Psoas muscle (tissue), 8 donors: ENCODE measurements at regions of chr6 and their contacts with region 1.

Region 1: DNA sequence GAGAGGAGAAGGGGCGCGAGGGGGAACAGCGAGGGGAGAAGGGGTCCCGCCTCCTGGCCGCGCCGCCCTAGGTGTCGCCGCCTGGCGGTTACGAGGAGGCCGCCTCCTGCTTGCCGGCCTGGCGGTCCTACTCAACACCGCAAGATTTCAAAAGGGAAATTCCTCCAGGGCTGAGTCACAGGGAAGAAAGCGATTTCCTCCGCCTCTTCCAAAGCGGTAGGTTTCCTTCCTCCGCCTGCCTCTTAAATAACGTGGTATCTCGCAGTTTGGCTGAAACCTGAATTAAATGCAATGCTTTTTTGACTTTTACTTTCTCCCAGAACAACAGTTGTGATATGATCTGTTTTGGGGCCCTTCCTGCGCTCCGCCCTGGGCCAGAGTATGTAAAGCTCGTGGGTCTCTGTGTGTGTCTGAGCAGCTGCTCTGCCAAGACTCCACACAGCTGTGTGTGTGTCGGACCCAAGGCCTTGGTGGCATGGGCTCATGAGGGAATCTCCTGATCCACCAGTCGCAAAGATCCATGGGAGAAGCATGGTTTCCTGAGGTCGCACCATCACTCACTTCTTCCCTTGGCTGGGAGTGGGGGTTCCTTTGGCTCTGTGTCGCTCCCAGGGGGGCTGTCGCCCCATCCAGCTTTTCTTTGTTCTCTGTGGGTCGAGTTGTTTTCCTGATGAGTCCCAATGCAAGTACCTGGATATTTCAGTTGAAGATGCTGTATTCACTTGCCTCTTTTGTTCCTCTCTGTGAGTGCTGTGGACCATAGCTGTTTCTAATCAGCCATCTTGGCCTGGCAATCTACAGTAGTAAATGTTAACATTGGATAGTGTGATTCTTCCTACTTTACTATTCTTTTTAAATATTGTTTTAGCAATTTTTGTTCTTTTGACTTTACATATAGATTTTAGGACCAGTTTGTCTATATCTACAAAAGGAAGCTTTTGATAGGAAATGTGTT is 31.6 kb upstream of the NOTCH4 start:
- DNase-seq: peak; percentile 72 to 80
- ATAC-seq: peak; percentile 88 to 97 (median 92)
- H3K4me3 ChIP-seq: peak overlapping the region; percentile 45
- H3K27ac ChIP-seq: peak overlapping the region; percentile 71
- H3K4me1 ChIP-seq: peaks cover 3% of the 10 kb centered on the region
- H3K27me3 ChIP-seq: peaks cover 0 to 15% (median 0%) of the 10 kb centered on the region in 3 donors
- CTCF ChIP-seq: peak; percentile 65

Region 2: DNA sequence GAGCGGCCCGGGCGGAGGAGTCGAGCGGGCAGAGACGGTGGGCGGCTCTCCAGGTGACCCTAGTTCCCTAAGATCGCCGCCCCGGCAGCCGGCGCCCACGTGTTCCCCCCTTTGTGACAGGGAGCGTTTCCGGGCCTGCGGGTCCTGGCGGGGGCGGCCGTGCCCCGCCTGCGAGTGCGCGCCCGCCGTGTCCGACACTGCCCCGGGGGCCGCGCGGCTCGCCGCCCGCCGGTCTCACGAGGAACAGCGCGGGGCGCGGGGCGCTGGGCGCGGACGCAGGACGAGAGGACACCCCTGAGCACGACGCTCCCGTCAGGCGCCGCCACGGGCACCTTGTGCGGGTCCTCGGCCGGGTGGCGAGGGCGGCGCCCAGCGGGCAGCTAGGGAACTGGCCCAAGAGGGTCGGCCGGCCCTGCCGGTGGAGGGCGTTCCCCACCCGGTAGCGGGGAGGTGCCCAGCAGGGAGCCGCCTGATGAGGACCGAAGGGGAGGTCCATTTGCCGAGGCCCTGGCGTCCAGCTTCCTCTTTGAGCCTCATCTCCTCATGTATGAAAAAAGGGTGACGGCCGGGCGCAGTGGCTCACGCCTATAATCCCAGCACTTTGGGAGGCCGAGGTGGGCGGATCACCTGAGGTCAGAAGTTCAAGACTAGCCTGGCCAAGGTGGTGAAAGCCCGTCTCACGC is 459.7 kb before region 1 on chr6 and contains the start of gene VARS1:
- intact Hi-C with region 1: no loop called
- DNase-seq: peak; percentile 93 to 96
- ATAC-seq: peak; percentile 90 to 93 (median 92)
- H3K4me3 ChIP-seq: peak within 1 kb of the TSS; percentile 81
- H3K27ac ChIP-seq: peak within 1 kb of the TSS; percentile 94
- H3K4me1 ChIP-seq: peaks cover 24% of the 10 kb centered on the region
- H3K27me3 ChIP-seq: no peaks in the 10 kb centered on the region
- CTCF ChIP-seq: peak; percentile 80
- total RNA-seq, gene VARS1: 53.2 to 108 (median 76.1) TPM

Region 3: DNA sequence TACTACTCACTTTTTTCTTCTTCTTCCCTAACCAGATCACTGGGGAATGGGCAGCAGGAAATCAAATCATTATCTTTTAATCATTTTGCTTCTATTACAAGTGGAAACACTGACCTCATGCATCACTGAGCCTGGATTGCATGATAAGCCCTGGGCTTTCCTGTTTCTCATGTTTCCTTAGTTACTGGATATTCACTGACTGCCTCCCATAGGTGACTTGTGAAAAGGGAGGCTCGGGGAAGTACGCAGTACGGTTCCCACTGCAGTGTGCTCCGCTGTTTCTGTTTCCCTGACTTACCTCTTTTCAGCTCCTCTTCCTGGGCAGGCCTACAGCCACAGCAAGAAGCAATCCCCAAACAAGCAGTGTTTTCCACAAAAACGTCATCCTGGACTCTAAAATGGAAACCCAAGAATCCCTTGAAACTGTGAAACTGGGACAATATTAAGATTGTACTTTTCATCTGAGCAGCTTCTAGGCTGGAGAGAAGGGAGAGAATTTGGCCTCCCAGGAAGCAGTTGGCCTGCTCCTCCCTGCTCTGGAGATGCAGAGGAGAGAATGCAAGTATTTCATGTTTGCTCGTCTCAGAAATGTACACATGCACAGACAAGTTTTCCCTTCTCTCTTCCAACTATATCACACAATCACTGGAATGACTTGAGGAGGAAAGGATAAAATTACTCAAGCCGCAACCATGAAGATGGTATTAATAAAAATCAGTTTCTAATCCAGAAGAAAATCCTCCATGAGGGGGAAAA is 138.4 kb after region 1 on chr6:
- intact Hi-C with region 1: loop called in 1 of 2 experiments (anchors 10 kb)
- DNase-seq: no peak
- ATAC-seq: peak in 3 of 4 donors; percentile 44 to 69 (median 46)
- H3K4me3 ChIP-seq: no peak overlapping the region
- H3K27ac ChIP-seq: peak overlapping the region; percentile 50
- H3K4me1 ChIP-seq: no peaks in the 10 kb centered on the region
- H3K27me3 ChIP-seq: no peaks in the 10 kb centered on the region
- CTCF ChIP-seq: no peak

Region 4: DNA sequence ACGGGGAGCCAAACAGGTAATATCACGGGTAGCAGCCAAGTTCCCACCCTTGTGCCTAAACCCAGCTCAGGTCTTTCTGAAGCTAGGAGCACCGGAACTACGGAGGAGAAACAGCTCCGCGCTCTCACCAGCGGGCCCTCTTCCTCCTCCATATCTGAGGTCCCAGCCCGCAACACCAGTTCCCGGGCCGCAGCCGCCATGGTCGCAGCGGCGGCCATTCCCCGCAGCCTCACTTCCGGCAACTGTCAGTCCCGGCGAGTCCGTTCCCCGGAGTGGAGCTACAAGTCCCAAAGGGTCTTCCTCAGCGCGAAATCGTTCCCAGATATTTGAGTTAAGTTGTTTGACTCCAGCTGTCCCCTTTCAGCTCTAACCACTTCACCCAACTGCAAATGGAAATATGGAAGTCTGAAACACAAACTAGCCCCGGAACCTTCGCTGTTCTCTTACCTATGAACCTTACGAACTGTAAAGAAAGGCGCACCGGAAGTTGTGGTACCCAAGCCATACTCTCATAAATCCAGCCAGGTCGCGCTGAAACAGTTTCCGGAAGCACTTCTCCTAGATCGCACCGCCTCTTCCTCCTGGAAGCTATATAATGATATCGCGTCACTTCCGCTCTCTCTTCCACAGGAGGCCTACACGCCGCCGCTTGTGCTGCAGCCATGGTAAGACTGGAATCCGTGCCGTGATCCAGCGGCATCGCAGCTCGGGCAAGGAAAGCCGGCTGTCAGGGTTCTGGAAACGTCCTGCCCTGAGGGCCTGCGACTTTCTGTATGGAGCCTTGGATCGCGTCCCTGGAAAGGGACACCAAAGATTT is 1016.2 kb after region 1 on chr6 and contains the starts of genes RPS18 and VPS52:
- intact Hi-C with region 1: no loop called
- DNase-seq: peak; percentile 89 to 94
- ATAC-seq: peak; percentile 94 to 97 (median 96)
- H3K4me3 ChIP-seq: peak within 1 kb of the TSS; percentile 81
- H3K27ac ChIP-seq: peak within 1 kb of the TSS; percentile 97
- H3K4me1 ChIP-seq: peaks cover 50% of the 10 kb centered on the region
- H3K27me3 ChIP-seq: no peaks in the 10 kb centered on the region
- CTCF ChIP-seq: no peak
- total RNA-seq, gene RPS18: 1,108 to 1,410 (median 1,267) TPM
- total RNA-seq, gene VPS52: 35.7 to 52.5 (median 46.8) TPM